Activated CD4-positive, alpha-beta memory T cell treated with anti-CD3 and anti-CD28 coated beads for 36 hours (primary cell): ENCODE measurements at regions of chr17 and their contacts with region 1.

Region 1: DNA sequence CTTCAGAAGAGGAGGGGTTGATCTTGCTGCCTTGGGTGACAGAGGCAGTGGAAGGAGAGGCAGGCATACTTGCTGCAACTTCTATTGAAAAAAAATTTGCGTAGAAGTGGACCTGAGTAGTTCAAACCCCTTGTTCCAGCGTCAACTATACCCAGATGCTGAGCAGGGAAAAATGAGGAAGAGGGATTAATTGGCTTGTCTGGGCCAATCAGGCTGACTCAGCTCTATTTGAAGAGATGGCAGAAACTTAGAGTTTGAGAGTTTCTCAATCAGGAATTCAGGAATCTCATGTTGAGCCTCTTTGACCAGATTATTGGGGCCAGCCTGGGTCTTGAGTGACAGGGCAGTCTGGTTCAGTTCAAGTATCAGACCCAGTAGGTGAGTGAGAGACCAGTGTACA is 17.6 kb downstream of the CASC3 start:
- DNase-seq: no peak
- H3K4me3 Mint-ChIP-seq: no peak overlapping the region
- H3K27ac Mint-ChIP-seq: peak overlapping the region; percentile 50
- H3K4me1 Mint-ChIP-seq: peaks cover 44% of the 10 kb centered on the region
- H3K27me3 Mint-ChIP-seq: no peaks in the 10 kb centered on the region

Region 2: GRCh38 chr17:40098846-40099618 is 58.9 kb before region 1 on chr17:
- CTCF ChIA-PET with region 1: no interaction called
- POLR2A ChIA-PET with region 1: interaction called, 3 read pairs
- intact Hi-C with region 1: loop called (anchors 1 kb)
- DNase-seq: peak; percentile 99
- H3K4me3 Mint-ChIP-seq: peak overlapping the region; percentile 88
- H3K27ac Mint-ChIP-seq: peak overlapping the region; percentile 91
- H3K4me1 Mint-ChIP-seq: peaks cover 85% of the 10 kb centered on the region
- H3K27me3 Mint-ChIP-seq: no peaks in the 10 kb centered on the region